ENCODE measurements at regions of chr11 and their contacts with region 1.

Region 1: GRCh38 chr11:128630367-128631230 is 43.2 kb upstream of the ETS1 start:
- DNase-seq: peak; percentile 85
- H3K4me3 ChIP-seq: no peak overlapping the region
- H3K27ac ChIP-seq: no peak overlapping the region
- H3K4me1 ChIP-seq: no peaks in the 10 kb centered on the region
- H3K27me3 ChIP-seq: peaks cover 35% of the 10 kb centered on the region
- CTCF ChIP-seq: peak; percentile 96

Region 2: DNA sequence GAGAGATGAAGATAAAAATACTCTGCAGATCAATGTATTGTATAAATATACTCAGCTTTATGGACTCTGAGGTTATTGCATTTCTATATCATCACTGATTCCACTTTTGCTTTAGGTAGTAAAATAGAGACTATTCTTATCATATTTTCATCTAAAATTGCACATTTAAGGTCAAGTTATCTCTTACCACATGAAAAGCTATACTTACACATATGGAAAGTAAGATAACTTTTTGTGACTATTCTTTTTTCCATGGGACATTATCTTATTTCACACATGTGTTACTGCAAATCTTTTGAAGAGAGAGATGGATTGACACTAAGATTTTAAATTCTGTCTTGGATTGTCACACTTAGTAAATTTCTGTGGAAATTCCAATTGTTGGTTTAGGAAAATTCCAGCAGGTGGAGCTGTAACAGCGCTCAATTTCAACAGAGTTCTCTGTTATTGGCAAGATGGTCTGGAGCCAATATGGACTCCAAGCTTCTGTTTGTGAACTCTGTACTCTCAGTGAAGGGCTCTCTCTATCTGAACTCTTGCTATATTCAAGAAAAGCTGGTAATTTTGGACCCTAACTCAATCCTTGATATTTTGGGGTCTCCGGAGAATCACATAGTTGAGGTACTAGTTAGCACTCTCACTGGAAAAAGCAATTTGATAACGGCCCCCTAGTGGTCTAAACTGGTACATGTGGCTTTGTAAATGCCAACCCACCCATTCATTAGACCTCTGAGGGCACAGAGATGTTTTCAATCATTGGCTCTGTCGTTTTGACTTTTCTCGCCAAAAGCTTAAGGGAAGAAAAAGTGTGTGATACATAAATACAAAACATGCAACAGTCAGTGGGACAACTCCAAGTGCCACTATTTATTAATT is 472.9 kb before region 1 on chr11:
- CTCF ChIA-PET with region 1: interaction called, 12 read pairs
- POLR2A ChIA-PET with region 1: no interaction called
- intact Hi-C with region 1: no loop called
- DNase-seq: peak; percentile 86
- H3K4me3 ChIP-seq: no peak overlapping the region
- H3K27ac ChIP-seq: no peak overlapping the region
- H3K4me1 ChIP-seq: no peaks in the 10 kb centered on the region
- H3K27me3 ChIP-seq: peaks cover 14% of the 10 kb centered on the region
- CTCF ChIP-seq: peak; percentile 98

Region 3: DNA sequence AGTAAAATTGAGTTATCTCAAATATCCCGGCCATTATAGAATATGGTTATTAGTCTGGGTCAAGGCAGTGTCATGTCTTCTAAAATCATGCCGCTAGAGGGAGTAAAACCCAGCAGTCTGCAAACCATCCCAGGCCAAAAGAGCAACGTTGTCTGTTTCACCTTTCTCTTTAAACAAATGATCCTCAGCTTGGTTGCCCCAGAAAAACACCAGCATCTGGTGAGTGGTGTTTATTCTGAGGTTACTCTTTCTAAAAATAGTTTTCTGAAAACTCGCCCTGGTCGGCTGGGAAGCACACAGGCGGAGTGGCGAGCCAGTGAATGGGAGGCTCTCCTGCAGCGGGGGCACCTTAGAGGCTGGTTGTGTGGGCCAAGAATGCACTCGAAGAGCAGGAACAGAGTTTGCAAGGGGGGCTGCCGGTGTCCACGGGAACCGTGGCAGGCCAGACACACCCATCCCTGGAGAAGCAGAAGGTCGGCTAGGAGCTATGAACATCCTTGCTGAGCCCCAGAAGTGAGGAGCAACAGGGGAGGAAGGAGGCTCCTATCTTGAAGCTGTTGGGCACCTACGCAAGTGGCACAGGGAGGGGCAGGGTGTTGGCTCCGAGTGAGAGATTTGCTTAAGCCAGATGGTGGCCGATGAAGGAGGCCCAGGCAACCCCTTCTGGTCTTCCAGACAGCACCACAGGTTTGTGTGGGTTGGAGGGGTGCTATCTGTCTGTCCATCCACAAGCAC is 340.3 kb before region 1 on chr11:
- CTCF ChIA-PET with region 1: interaction called, 5 read pairs
- POLR2A ChIA-PET with region 1: no interaction called
- intact Hi-C with region 1: loop called (anchors 2 kb)
- DNase-seq: peak; percentile 65
- H3K4me3 ChIP-seq: no peak overlapping the region
- H3K27ac ChIP-seq: no peak overlapping the region
- H3K4me1 ChIP-seq: no peaks in the 10 kb centered on the region
- H3K27me3 ChIP-seq: peaks cover 76% of the 10 kb centered on the region
- CTCF ChIP-seq: peak; percentile 89

Region 4: DNA sequence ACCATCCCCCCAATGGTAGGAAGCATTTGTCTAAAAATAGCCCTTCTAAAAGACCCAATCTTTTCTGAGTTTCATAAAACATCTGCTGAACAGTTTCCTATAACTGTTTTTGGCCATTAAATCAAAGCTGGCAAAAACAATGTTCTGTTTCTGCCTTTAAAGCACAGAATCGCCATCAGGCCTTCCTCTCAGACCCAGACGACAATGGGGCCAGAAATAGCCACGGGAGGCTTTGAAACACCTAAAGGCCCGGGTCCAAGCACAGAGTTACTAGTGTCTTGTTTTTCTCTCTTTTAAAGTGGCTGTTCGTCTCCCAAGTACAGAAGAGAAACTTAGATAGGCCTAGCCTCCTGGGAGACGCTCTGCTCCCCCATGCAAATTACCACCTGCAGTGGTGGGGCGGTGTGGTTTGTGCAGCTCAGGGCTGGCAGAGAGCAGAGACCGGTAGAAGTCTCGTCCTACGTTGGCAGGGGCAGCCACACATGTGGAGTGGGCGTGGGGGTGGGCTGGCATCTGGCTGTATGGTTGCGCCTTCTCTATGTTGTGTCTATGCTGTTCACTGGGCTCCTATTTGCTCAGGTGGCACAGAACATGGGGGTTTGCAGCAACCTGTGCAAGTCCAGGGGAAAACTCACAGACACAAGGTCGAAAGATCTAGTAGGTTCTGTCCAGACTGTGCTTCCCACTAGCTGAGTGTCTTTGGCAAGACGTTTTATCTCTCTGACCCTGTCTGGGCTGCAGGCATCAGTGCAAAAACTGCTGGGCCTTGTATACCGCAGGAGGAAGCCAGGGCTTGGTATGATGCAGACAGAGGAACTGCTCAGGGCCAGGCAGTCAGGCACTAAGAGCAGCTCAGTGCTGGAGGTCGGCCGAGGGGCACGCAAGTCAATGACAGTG is 19.6 kb before region 1 on chr11:
- CTCF ChIA-PET with region 1: interaction called, 13 read pairs
- POLR2A ChIA-PET with region 1: no interaction called
- intact Hi-C with region 1: no loop called
- DNase-seq: no peak
- H3K4me3 ChIP-seq: no peak overlapping the region
- H3K27ac ChIP-seq: no peak overlapping the region
- H3K4me1 ChIP-seq: no peaks in the 10 kb centered on the region
- H3K27me3 ChIP-seq: peaks cover 91% of the 10 kb centered on the region
- CTCF ChIP-seq: no peak

Region 5: GRCh38 chr11:128968916-128969315 is 338.3 kb after region 1 on chr11:
- CTCF ChIA-PET with region 1: no interaction called
- POLR2A ChIA-PET with region 1: no interaction called
- intact Hi-C with region 1: no loop called
- DNase-seq: no peak
- H3K4me3 ChIP-seq: no peak overlapping the region
- H3K27ac ChIP-seq: no peak overlapping the region
- H3K4me1 ChIP-seq: no peaks in the 10 kb centered on the region
- H3K27me3 ChIP-seq: no peaks in the 10 kb centered on the region
- CTCF ChIP-seq: no peak